OCI-LY7 (cell line): ENCODE measurements at regions of chr3 and their contacts with region 1.

Region 1: GRCh38 chr3:168061332-168061996 is 34.3 kb downstream of the GOLIM4 start:
- DNase-seq: peak; percentile 14
- H3K4me3 ChIP-seq: no peak overlapping the region
- H3K27ac ChIP-seq: no peak overlapping the region
- H3K4me1 ChIP-seq: no peaks in the 10 kb centered on the region
- CTCF ChIP-seq: peak; percentile 55

Region 2: GRCh38 chr3:168088106-168088720 is 26.7 kb after region 1 on chr3:
- CTCF ChIA-PET with region 1: no interaction called
- POLR2A ChIA-PET with region 1: interaction called, 12 read pairs
- intact Hi-C with region 1: no loop called
- DNase-seq: peak; percentile 78
- H3K4me3 ChIP-seq: peak overlapping the region; percentile 52
- H3K27ac ChIP-seq: peak overlapping the region; percentile 79
- H3K4me1 ChIP-seq: peaks cover 92% of the 10 kb centered on the region
- CTCF ChIP-seq: peak; percentile 76